PC-3 (cell line): ENCODE measurements at regions of chr20 and their contacts with region 1.

Region 1: GRCh38 chr20:1325173-1326030 is 3.5 kb downstream of the SDCBP2 start:
- DNase-seq: peak; percentile 98
- ATAC-seq: peak; percentile 66
- H3K4me3 ChIP-seq: peak overlapping the region; percentile 74
- H3K27ac ChIP-seq: peak overlapping the region; percentile 92
- H3K4me1 ChIP-seq: peaks cover 71% of the 10 kb centered on the region
- H3K27me3 ChIP-seq: no peaks in the 10 kb centered on the region
- CTCF ChIP-seq: no peak

Region 2: GRCh38 chr20:1336699-1337367 is 11.4 kb after region 1 on chr20:
- CTCF ChIA-PET with region 1: no interaction called
- POLR2A ChIA-PET with region 1: interaction called, 5 read pairs
- intact Hi-C with region 1: loop called (anchors 1 kb)
- DNase-seq: no peak
- ATAC-seq: peak; percentile 54
- H3K4me3 ChIP-seq: no peak overlapping the region
- H3K27ac ChIP-seq: no peak overlapping the region
- H3K4me1 ChIP-seq: peaks cover 16% of the 10 kb centered on the region
- H3K27me3 ChIP-seq: no peaks in the 10 kb centered on the region
- CTCF ChIP-seq: no peak

Region 3: DNA sequence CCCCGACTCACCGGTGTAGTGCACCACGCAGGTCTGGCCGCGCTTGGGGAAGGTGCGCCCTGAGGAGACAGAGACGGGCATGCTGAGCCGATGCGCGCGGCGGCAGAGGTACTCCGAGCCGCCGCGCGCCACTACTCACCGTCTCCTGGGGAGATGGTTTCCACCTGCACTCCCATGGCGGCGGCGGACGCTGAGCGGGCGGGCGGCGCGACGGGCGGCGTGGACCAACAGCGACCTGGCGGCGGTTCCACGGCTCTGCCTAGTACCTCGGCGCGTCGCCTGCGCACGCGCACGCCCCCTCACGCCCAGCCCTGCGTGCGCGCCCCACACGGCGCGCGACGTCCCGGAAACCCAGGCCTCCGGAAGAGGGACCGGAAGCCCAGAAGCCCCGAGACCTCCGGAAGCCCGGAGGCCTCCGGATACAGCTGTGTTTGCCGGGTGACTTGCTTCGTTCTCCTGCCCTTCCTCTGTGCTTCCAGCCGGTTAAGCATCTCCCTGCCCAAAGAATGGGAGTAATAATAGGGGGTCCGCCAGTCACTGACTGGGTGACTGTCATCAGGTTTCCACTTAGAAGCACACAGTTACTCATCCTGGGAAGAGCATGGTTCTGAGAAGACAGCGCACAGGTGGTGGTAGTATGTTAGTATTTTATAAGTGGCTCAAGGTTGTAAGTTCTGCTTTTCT is 67.6 kb after region 1 on chr20 and contains the start of gene FKBP1A:
- CTCF ChIA-PET with region 1: interaction called, 18 read pairs
- POLR2A ChIA-PET with region 1: no interaction called
- intact Hi-C with region 1: loop called (anchors 2 kb)
- DNase-seq: peak; percentile 99
- ATAC-seq: peak; percentile 78
- H3K4me3 ChIP-seq: peak within 1 kb of the TSS; percentile 79
- H3K27ac ChIP-seq: peak within 1 kb of the TSS; percentile 43
- H3K4me1 ChIP-seq: peaks cover 66% of the 10 kb centered on the region
- H3K27me3 ChIP-seq: no peaks in the 10 kb centered on the region
- CTCF ChIP-seq: no peak
- total RNA-seq, gene FKBP1A: 178 and 198 TPM in 2 replicates

Region 4: GRCh38 chr20:1466211-1467081 is 141.0 kb after region 1 on chr20 and contains the start of gene NSFL1C:
- CTCF ChIA-PET with region 1: no interaction called
- POLR2A ChIA-PET with region 1: no interaction called
- intact Hi-C with region 1: loop called (anchors 1 kb)
- DNase-seq: peak; percentile 99
- ATAC-seq: peak; percentile 77
- H3K4me3 ChIP-seq: peak within 1 kb of the TSS; percentile 77
- H3K27ac ChIP-seq: peak within 1 kb of the TSS; percentile 85
- H3K4me1 ChIP-seq: peaks cover 49% of the 10 kb centered on the region
- H3K27me3 ChIP-seq: no peaks in the 10 kb centered on the region
- CTCF ChIP-seq: peak; percentile 91
- total RNA-seq, gene NSFL1C: 170 and 217 TPM in 2 replicates